AG04450 (cell line): ENCODE measurements at regions of chr9 and their contacts with region 1.

Region 1: GRCh38 chr9:114587385-114588202 is at the start of gene ATP6V1G1:
- DNase-seq: peak; percentile 97
- H3K4me3 ChIP-seq: peak within 1 kb of the TSS; percentile 97
- H3K27ac ChIP-seq: peak within 1 kb of the TSS; percentile 81
- H3K27me3 ChIP-seq: peaks cover 5% of the 10 kb centered on the region
- CTCF ChIP-seq: peak; percentile 21; the same call in 1 of the 2 replicates
- polyA plus RNA-seq, gene ATP6V1G1: 118 and 138 TPM in 2 replicates

Region 2: GRCh38 chr9:114184074-114184473 is 403.5 kb before region 1 on chr9:
- CTCF ChIA-PET with region 1: no interaction called
- POLR2A ChIA-PET with region 1: no interaction called
- DNase-seq: no peak
- H3K4me3 ChIP-seq: no peak overlapping the region
- H3K27ac ChIP-seq: no peak overlapping the region
- H3K27me3 ChIP-seq: no peaks in the 10 kb centered on the region
- CTCF ChIP-seq: no peak

Region 3: DNA sequence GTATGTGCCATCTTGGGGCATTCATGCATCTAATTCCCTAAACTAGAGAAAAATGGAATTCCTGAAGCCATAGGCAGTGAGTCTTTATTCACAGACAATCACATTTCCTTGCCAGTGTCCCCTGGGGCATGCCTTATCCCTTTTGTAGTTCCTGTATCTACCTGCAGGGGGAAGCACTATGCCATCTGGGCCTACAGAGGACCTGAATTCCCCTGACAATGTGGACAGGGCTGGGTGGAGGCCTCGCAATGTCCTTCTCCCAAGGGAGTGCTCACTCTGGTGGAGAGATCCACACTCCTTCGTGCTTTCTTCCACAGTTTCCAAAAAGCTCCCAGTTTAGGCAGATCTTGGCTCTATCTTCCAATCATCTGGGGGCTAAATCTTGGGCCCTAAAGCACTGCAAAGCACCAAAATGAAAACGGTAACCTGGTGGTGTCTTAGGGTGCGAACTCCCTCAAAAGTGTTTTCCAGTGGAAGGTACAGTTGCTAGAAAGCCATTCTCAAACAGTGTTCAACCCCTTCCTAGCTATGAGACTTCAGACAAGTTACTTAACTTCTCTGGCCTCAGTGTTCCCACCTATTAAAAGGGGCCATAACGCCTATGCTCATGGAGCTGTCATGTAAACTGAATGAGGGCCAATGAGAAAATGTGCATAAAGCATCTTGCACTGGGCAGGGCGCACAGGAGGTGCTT is 99.8 kb before region 1 on chr9:
- CTCF ChIA-PET with region 1: interaction called, 11 read pairs
- POLR2A ChIA-PET with region 1: no interaction called
- DNase-seq: peak; percentile 21
- H3K4me3 ChIP-seq: no peak overlapping the region
- H3K27ac ChIP-seq: no peak overlapping the region
- H3K27me3 ChIP-seq: peaks cover 8% of the 10 kb centered on the region
- CTCF ChIP-seq: peak; percentile 96

Region 4: DNA sequence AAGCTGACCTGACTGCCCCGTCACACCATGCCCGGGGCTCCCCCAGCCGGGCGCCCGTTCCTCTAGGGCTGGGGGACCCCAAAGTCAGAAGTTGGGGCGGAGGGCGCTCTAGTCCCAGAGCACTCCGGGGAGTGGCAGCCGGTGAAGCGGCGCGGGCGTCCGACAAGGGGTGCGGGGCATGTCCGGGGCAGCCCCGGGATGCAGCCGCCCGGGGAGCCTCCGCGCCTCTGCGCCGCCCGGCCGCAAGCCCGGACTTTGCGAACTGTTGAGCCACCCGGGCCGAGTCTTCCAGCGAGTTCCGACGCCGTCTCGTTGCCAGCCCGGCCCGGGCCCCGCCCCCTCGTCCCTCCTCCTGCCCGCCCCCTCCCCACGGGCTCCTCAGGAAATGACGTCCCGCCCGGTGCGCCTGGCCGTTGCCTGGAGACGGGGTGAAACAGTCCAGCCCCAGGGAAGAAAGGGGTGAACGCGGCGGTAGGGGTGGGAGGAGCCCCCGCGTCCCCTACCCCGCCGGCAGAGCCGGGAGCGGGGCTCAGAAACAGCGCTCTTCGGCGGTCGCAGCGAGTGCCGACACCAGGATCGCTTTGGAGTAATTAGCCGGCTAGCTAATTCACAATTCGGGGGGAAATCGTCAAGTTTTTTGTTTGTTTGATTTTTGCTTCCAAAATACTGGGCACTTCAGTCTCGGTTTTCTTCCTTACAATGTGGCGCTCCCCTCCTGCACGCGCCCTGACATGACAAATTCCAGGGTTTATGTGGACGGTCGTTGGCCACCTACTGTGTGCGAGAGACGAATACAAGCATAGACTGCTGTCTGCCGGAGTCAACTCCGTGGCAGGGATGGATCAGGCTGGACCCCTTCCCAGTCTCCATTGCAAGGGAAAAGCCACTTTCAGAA is 82.2 kb before region 1 on chr9 and contains the start of gene WHRN:
- CTCF ChIA-PET with region 1: interaction called, 3 read pairs
- POLR2A ChIA-PET with region 1: interaction called, 36 read pairs
- DNase-seq: peak; percentile 44
- H3K4me3 ChIP-seq: peak within 1 kb of the TSS; percentile 70
- H3K27ac ChIP-seq: no peak within 1 kb of the TSS
- H3K27me3 ChIP-seq: peaks cover 37% of the 10 kb centered on the region
- CTCF ChIP-seq: no peak
- polyA plus RNA-seq, gene WHRN: 1.1 and 1.2 TPM in 2 replicates

Region 5: DNA sequence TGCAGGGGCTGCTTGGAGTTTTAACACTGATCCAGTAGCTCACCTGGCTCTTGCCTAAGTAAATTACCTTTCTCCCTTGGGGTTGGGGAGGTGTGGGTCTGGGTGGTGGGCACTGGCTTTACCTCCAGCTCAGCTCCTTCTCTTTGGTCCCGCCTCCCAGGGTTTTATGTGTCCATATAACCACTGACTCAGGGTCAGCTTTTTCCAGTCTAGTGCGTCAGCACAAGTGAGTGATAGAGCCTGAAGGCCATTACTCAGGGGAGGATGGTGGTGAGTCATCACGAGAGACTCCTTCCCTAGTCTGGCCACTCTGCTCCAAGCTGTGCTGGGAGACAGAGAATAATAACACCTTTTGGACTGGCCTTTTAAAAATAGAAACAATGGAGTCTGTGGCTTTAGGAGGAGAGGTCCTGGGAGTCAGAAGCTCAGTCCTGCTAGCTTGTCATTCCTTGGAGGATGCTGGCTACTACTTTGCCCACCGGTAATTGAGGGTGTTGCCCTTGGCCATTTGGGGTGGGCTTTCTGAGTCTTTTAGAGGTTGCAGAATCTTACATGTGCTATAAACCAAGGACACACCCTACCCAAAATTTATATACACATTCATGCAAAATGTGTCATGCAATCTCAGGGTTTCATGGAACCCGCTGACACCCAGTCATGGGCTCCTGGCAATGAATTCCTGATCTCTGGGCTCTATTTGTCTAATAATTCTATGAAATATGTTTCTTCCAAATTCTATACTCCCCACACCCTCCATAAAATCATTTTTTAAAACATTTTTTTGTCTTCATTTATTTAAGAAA is 35.5 kb before region 1 on chr9:
- CTCF ChIA-PET with region 1: interaction called, 3 read pairs
- POLR2A ChIA-PET with region 1: interaction called, 11 read pairs
- DNase-seq: peak; percentile 85
- H3K4me3 ChIP-seq: no peak overlapping the region
- H3K27ac ChIP-seq: peak overlapping the region; percentile 82
- H3K27me3 ChIP-seq: peaks cover 5% of the 10 kb centered on the region
- CTCF ChIP-seq: no peak

Region 6: DNA sequence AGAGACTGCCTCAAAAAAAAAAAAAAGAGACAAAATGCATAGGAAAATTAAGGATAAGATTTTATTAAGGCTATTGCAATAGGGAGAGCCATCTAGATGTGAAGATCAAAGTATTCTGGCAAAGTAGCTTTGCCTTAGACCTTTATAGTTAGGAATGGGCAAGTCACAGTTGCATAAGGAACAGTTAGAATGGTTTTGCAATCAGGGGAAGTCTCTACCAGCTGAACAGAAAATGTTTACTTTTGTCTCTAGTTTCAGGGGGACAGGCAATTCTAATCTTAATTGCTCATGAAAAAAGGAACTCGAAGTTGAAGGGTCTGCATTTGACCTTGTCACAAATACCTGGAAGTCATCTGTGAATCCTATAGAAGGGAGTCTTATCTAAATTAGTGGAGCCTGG is 13.2 kb before region 1 on chr9:
- CTCF ChIA-PET with region 1: interaction called, 3 read pairs
- POLR2A ChIA-PET with region 1: interaction called, 12 read pairs
- DNase-seq: no peak
- H3K4me3 ChIP-seq: no peak overlapping the region
- H3K27ac ChIP-seq: no peak overlapping the region
- H3K27me3 ChIP-seq: peaks cover 8% of the 10 kb centered on the region
- CTCF ChIP-seq: no peak

Region 7: DNA sequence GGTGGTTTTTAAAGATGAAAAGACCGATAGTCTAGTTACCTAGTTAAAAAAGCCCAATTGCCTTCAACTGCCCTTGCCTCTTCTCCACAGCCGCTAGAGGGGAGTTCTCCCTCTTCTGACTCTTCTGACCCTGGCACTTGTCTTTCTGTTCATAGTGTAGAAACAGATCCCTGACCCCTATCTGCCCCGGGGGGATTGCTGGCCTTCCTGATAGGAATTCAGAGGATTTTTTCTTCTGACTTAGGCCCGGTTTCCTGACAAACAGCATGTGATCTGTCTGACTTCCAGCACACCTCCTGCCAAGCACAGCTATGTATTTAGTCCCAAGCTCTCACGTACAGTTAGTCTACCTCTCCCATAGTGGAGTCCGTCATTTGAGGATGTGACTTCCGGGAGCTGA is 18.5 kb after region 1 on chr9:
- CTCF ChIA-PET with region 1: interaction called, 4 read pairs
- POLR2A ChIA-PET with region 1: interaction called, 14 read pairs
- DNase-seq: no peak
- H3K4me3 ChIP-seq: no peak overlapping the region
- H3K27ac ChIP-seq: no peak overlapping the region
- H3K27me3 ChIP-seq: no peaks in the 10 kb centered on the region
- CTCF ChIP-seq: no peak

Region 8: GRCh38 chr9:114611516-114612271 is 24.1 kb after region 1 on chr9:
- CTCF ChIA-PET with region 1: interaction called, 4 read pairs
- POLR2A ChIA-PET with region 1: interaction called, 14 read pairs
- DNase-seq: no peak
- H3K4me3 ChIP-seq: peak overlapping the region; percentile 65
- H3K27ac ChIP-seq: peak overlapping the region; percentile 77
- H3K27me3 ChIP-seq: no peaks in the 10 kb centered on the region
- CTCF ChIP-seq: no peak

Region 9: GRCh38 chr9:114709636-114710035 is 122.0 kb after region 1 on chr9:
- CTCF ChIA-PET with region 1: no interaction called
- POLR2A ChIA-PET with region 1: no interaction called
- DNase-seq: no peak
- H3K4me3 ChIP-seq: no peak overlapping the region
- H3K27ac ChIP-seq: no peak overlapping the region
- H3K27me3 ChIP-seq: peaks cover 15% of the 10 kb centered on the region
- CTCF ChIP-seq: no peak